ENCODE measurements at regions of chr14 and their contacts with region 1.

Region 1: DNA sequence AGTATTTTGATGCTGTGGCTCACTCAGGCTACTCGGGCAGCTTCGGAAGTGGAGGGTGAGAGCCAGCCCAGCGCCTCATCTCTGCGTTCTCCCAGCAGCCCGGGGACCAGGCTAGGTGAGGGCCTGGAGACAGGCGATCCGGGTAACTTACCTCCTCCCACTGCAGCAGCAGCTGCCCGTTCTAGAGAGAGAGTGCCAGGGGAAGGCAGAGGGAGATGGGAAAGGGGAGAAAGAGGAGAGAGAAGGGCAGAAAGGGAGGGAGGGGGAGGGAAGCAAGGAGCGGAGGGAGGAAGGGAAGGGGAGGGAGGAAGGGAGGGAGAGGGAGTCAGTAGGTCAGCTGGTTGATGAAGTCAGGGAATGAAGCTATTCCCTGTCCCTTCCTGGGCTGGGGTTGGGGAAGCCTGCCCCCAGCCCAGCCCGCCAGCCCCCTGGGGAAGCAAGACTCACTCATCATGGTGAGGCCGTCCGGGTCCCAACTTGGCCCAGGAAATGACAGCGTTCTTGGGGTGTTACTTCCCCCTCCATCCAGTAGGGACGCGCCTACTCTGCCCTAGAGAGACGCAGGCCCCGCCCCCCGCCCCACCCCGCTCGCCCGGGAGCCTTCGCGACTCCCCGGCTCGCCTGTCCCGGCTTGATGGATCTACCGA is at the start of gene IFI27L2:
- DNase-seq: peak; percentile 84
- ATAC-seq: peak; percentile 99
- H3K4me3 Mint-ChIP-seq: peak within 1 kb of the TSS; percentile 76
- H3K27ac Mint-ChIP-seq: peak within 1 kb of the TSS; percentile 66
- H3K4me1 Mint-ChIP-seq: peaks cover 15% of the 10 kb centered on the region
- H3K27me3 Mint-ChIP-seq: peaks cover 3% of the 10 kb centered on the region
- CTCF ChIP-seq: peak; percentile 44
- total RNA-seq, gene IFI27L2: 43.0 to 44.5 TPM

Region 2: DNA sequence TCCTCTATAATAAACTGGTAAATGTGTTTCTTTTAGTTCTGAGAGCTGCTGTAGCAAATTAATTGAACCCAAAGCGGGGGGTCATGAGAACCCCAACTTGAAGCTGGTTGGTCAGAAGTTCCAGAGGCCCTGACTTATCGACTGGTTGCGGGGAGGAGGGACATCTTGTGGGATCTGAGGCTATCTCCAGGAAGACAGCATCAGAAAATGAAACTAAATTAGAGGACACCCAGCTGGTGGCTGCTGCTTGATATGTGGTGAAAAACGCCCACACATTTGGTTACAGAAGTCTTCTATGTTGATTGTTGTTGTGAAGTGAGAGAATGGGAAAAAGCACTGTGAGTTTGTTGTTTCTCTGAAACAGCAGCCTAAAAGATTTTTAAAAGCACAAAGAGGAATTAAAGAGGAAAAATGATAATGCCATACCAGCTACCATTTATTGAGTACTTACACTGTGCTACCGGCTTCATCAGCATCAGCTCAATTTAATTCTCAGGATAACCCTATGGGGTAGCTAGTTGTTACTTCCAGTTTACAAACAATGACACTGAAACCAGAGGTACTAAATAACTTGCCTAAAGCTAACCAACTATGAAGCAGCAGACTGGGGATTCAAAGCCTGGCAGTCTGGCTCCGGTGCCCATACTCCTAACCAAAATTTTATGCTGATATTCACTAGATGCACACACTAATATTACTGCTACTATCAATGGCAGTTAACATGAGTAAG is 72.5 kb before region 1 on chr14:
- CTCF ChIA-PET with region 1: interaction called, 10 read pairs
- POLR2A ChIA-PET with region 1: no interaction called
- intact Hi-C with region 1: no loop called
- DNase-seq: peak; percentile 74
- ATAC-seq: peak; percentile 80
- H3K4me3 Mint-ChIP-seq: no peak overlapping the region
- H3K27ac Mint-ChIP-seq: peak overlapping the region; percentile 80
- H3K4me1 Mint-ChIP-seq: peaks cover 54% of the 10 kb centered on the region
- H3K27me3 Mint-ChIP-seq: no peaks in the 10 kb centered on the region
- CTCF ChIP-seq: no peak

Region 3: DNA sequence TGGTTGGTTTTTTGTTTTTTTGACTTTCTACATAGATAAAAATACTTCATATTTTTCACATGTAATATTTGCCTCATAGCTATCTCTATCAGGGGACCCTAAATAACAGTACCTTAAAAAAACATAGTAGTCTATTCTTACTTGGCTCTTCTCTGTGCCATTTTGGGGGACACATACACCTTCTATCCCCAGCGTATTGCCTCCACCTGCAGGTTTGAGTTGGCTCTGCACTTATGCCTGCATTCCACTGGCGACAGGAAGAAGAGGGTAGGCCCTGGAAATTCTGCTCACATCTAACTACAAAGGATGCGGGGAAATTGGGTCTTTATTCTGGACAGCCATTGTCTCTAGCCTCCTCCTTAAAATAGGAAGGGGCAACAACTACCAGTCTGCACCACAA is 14.0 kb after region 1 on chr14:
- CTCF ChIA-PET with region 1: interaction called, 14 read pairs
- POLR2A ChIA-PET with region 1: interaction called, 3 read pairs
- intact Hi-C with region 1: no loop called
- DNase-seq: peak; percentile 34
- ATAC-seq: peak; percentile 64
- H3K4me3 Mint-ChIP-seq: no peak overlapping the region
- H3K27ac Mint-ChIP-seq: no peak overlapping the region
- H3K4me1 Mint-ChIP-seq: peaks cover 16% of the 10 kb centered on the region
- H3K27me3 Mint-ChIP-seq: peaks cover 1% of the 10 kb centered on the region
- CTCF ChIP-seq: peak; percentile 54

Region 4: DNA sequence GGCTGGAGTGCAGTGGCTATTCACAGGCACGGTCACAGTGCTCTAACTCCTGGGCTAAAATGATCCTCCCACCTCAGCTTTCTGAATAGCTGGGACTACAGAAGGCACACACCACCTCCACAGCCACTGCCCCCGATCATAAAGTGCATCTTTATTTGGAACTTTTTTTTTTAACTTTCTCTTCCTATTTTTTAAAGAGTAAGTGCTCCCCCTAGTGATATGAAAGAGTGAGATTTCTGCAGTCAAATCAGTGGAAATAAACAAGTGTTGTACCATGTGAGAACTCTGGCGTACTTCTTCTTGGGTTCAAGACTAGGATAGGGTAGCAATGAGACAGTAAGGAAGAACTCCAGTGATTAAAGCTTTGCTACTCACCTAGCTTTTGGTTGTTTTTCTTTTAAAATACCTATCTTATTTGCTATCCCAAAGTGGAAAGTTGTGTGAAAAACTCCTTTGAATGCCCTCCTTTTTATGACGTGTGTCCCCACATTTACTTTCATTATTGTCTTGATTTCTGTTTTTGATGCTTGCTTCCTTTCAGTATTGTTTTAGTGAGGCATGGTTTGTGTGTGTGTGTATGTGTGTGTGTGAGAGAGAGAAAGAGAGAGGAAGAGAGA is 51.5 kb after region 1 on chr14:
- CTCF ChIA-PET with region 1: interaction called, 65 read pairs
- POLR2A ChIA-PET with region 1: interaction called, 4 read pairs
- intact Hi-C with region 1: no loop called
- DNase-seq: no peak
- ATAC-seq: peak; percentile 81
- H3K4me3 Mint-ChIP-seq: peak overlapping the region; percentile 47
- H3K27ac Mint-ChIP-seq: peak overlapping the region; percentile 5
- H3K4me1 Mint-ChIP-seq: peaks cover 13% of the 10 kb centered on the region
- H3K27me3 Mint-ChIP-seq: peaks cover 19% of the 10 kb centered on the region
- CTCF ChIP-seq: peak; percentile 73